Panc1 (cell line): ENCODE measurements at regions of chr15 and their contacts with region 1.

Region 1: GRCh38 chr15:71448688-71449114 is 333.4 kb downstream of the THSD4 start:
- DNase-seq: peak; percentile 57
- ATAC-seq: peak; percentile 56; the same call in 1 of the 2 replicates
- H3K4me3 ChIP-seq: no peak overlapping the region
- H3K27ac ChIP-seq: no peak overlapping the region; the same call in 1 of the 2 replicates
- H3K4me1 ChIP-seq: peaks cover 13% of the 10 kb centered on the region
- H3K27me3 ChIP-seq: no peaks in the 10 kb centered on the region
- CTCF ChIP-seq: peak; percentile 90

Region 2: GRCh38 chr15:71278989-71279756 is 169.5 kb before region 1 on chr15:
- CTCF ChIA-PET with region 1: no interaction called
- POLR2A ChIA-PET with region 1: no interaction called
- in situ Hi-C with region 1: no loop called
- intact Hi-C with region 1: loop called (anchors 10 kb)
- DNase-seq: no peak
- ATAC-seq: no peak; the same call in 1 of the 2 replicates
- H3K4me3 ChIP-seq: no peak overlapping the region
- H3K27ac ChIP-seq: peak overlapping the region; percentile 26; the same call in 1 of the 2 replicates
- H3K4me1 ChIP-seq: peaks cover 28% of the 10 kb centered on the region
- H3K27me3 ChIP-seq: no peaks in the 10 kb centered on the region
- CTCF ChIP-seq: no peak

Region 3: DNA sequence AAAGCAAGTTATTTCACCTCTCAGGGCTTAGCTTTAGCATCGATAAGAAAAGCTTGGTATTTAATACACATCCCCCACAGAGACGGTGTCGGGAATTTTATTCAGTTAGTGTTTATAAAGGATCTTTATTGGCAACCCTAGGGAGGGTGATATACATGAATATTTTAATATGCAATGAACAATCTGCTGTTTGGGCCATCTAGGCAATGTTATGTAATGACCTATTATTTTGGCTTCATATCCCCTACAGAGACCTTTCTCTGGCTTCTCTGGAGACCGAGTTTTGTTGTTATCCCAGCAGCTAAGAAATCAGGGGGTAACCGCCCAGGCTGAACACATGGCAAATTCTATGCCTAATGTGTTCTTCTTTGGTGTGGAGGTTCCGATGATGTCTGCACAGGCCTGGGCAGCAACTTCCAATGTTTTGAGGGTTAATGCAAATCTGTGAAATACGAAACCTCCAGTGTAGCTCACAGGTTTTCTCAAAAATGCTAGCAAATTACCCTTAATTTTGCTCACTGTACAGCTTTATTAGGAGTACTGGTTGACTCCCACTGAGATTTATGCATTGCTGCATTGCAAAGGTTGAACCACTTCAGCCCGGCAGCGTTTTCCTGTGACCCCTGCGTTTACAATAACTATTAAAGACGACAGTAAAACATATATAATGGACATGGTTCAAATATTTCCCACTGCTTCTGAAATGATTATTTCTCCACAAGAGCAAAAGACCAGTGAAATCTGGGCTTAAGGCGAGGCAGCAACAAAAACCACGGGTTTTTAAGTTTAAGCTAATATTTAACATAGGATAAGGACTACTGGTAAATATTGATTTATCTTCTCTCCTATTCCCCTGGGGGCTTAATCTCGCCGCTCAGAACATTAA is 63.3 kb after region 1 on chr15:
- CTCF ChIA-PET with region 1: no interaction called
- POLR2A ChIA-PET with region 1: no interaction called
- in situ Hi-C with region 1: no loop called
- intact Hi-C with region 1: no loop called
- DNase-seq: no peak
- ATAC-seq: no peak
- H3K4me3 ChIP-seq: no peak overlapping the region
- H3K27ac ChIP-seq: no peak overlapping the region
- H3K4me1 ChIP-seq: no peaks in the 10 kb centered on the region
- H3K27me3 ChIP-seq: no peaks in the 10 kb centered on the region
- CTCF ChIP-seq: no peak

Region 4: DNA sequence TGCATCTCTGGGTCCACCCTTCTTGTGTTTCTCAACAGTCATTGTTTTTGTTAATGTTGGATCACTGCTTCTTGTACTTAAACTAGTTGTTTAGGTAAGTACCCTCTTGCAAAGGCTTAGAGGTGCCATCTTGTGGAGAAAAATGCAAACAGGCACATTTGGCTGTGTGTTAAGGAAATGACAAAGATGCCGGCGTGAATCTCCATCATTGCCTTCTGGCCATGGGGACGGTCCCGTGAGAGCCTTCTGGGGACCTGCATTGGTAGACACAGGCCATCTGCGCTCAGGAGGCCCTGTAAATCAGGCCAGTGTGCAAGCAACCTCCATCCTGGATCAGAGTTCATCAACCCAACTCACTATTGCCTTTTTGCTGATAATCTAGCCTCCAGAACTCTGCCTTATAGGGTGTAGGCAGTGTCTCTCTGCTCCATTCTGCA is 203.1 kb after region 1 on chr15:
- CTCF ChIA-PET with region 1: no interaction called
- POLR2A ChIA-PET with region 1: no interaction called
- in situ Hi-C with region 1: no loop called
- intact Hi-C with region 1: loop called (anchors 5 kb)
- DNase-seq: peak; percentile 28
- ATAC-seq: peak; percentile 80
- H3K4me3 ChIP-seq: no peak overlapping the region
- H3K27ac ChIP-seq: no peak overlapping the region
- H3K4me1 ChIP-seq: no peaks in the 10 kb centered on the region
- H3K27me3 ChIP-seq: no peaks in the 10 kb centered on the region
- CTCF ChIP-seq: peak; percentile 75

Region 5: GRCh38 chr15:71800835-71801745 is 352.4 kb after region 1 on chr15:
- CTCF ChIA-PET with region 1: no interaction called
- POLR2A ChIA-PET with region 1: no interaction called
- in situ Hi-C with region 1: no loop called
- intact Hi-C with region 1: loop called (anchors 2 kb)
- DNase-seq: peak; percentile 64
- ATAC-seq: peak; percentile 89
- H3K4me3 ChIP-seq: no peak overlapping the region
- H3K27ac ChIP-seq: no peak overlapping the region; the same call in 1 of the 2 replicates
- H3K4me1 ChIP-seq: peaks cover 16% of the 10 kb centered on the region
- H3K27me3 ChIP-seq: no peaks in the 10 kb centered on the region
- CTCF ChIP-seq: peak; percentile 87